ENCODE measurements at regions of chr12 and their contacts with region 1.

Region 1: GRCh38 chr12:70242695-70243509 is at the start of gene CNOT2:
- DNase-seq: peak; percentile 88
- ATAC-seq: peak; percentile 88
- H3K4me3 Mint-ChIP-seq: peak within 1 kb of the TSS; percentile 99
- H3K27ac Mint-ChIP-seq: peak within 1 kb of the TSS; percentile 100
- H3K4me1 Mint-ChIP-seq: peaks cover 56% of the 10 kb centered on the region
- H3K27me3 Mint-ChIP-seq: no peaks in the 10 kb centered on the region
- CTCF ChIP-seq: no peak
- total RNA-seq, gene CNOT2: 59.7 to 64.7 TPM (median 60.5 TPM) in 3 replicates

Region 2: DNA sequence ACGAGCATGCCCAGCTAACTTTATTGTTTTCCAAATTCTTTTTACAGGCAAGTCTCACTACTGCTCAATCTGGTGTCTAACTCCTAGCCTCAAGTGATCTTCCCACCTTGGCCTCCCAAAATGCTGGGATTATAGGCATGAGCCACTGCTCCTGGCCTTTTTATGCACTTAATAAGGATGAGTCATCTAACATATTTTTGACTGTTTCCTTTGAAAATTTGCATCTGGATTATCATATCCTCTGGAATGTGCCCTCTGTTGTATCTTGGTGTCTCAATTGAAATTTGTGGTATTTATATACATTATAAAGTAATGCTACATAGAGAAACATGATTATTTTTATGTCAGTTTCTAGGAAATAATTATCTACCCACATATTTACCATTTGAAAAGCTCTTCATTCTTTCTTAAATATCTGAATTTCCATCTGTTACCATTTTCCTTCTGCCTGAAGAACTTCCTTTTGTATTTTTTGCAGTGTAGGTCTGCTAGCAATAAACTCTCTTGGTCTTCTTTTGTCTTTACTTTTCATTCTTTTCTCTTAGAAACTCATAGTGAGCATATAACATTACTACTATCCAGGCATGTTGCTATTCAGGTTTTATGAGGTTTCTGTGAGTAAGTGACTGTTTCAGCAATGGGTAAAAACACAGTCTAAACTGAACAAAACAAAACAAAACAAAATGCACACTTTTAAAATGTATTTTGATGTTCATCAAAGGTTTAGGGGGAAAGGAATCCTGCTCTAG is 52.5 kb before region 1 on chr12:
- CTCF ChIA-PET with region 1: no interaction called
- POLR2A ChIA-PET with region 1: no interaction called
- DNase-seq: no peak
- ATAC-seq: no peak
- H3K4me3 Mint-ChIP-seq: no peak overlapping the region
- H3K27ac Mint-ChIP-seq: no peak overlapping the region
- H3K4me1 Mint-ChIP-seq: peaks cover 9% of the 10 kb centered on the region
- H3K27me3 Mint-ChIP-seq: no peaks in the 10 kb centered on the region
- CTCF ChIP-seq: no peak

Region 3: GRCh38 chr12:70365648-70366518 is 123.0 kb after region 1 on chr12 and contains the start of gene KCNMB4:
- CTCF ChIA-PET with region 1: no interaction called
- POLR2A ChIA-PET with region 1: interaction called, 12 read pairs
- DNase-seq: peak; percentile 93
- ATAC-seq: peak; percentile 94
- H3K4me3 Mint-ChIP-seq: peak within 1 kb of the TSS; percentile 91
- H3K27ac Mint-ChIP-seq: peak within 1 kb of the TSS; percentile 72
- H3K4me1 Mint-ChIP-seq: peaks cover 30% of the 10 kb centered on the region
- H3K27me3 Mint-ChIP-seq: peaks cover 3% of the 10 kb centered on the region; the same call in 1 of the 2 replicates
- CTCF ChIP-seq: no peak
- total RNA-seq, gene KCNMB4: 21.5 to 23.3 TPM (median 21.5 TPM) in 3 replicates

Region 4: DNA sequence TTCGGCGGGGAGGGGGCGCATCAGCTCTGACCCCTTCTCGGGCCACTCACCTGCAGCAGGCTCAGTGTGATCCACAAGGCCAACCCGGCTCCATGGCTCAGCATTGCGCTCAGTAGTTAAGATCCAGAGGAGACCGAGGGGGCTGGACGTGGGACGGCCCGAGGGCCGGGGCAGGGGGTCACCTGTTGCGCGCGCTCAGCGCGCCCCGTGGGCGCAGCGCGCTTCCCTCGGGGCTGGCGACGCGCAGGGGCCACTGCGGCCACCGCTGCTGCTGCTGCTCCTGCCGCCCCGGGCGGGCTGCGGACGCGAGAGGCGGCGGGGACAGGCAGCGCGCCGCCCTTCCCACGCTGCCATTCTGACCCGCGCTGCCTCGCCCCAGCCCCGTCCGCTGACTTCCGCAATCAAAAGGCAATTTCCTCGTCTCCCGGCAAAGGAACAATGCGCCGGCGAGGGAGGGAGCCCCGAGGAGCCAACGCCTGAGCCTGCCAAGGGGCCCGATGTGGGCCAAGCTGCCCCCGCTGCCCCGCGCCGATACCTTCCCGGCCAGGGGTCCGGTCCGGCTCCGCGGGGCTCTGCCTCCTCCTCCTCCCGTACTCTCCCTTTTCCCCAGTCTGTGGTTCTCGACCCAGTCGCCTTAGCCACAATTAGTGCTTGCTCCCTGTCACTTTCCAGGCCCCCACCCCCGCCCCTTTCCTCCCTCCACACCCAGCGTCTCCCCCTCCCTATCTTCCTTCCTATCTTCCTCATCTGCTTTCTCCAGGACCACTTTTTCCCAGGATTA is 367.0 kb after region 1 on chr12:
- CTCF ChIA-PET with region 1: no interaction called
- POLR2A ChIA-PET with region 1: no interaction called
- DNase-seq: peak; percentile 46
- ATAC-seq: peak; percentile 72
- H3K4me3 Mint-ChIP-seq: peak overlapping the region; percentile 84
- H3K27ac Mint-ChIP-seq: no peak overlapping the region
- H3K4me1 Mint-ChIP-seq: peaks cover 48% of the 10 kb centered on the region
- H3K27me3 Mint-ChIP-seq: peaks cover 33% of the 10 kb centered on the region
- CTCF ChIP-seq: no peak

Region 5: GRCh38 chr12:71057330-71057729 is 814.4 kb after region 1 on chr12:
- CTCF ChIA-PET with region 1: no interaction called
- POLR2A ChIA-PET with region 1: no interaction called
- DNase-seq: no peak
- ATAC-seq: no peak
- H3K4me3 Mint-ChIP-seq: no peak overlapping the region
- H3K27ac Mint-ChIP-seq: no peak overlapping the region
- H3K4me1 Mint-ChIP-seq: no peaks in the 10 kb centered on the region
- H3K27me3 Mint-ChIP-seq: no peaks in the 10 kb centered on the region
- CTCF ChIP-seq: no peak

Measured in WTC11 (cell line).